Prostate gland (tissue), 2 donors: ENCODE measurements at regions of chr16 and their contacts with region 1.

Region 1: GRCh38 chr16:22388101-22388644 is 13.8 kb upstream of the CDR2 start:
- DNase-seq: no peak
- H3K4me3 ChIP-seq: no peak overlapping the region
- H3K27ac ChIP-seq: no peak overlapping the region
- H3K4me1 ChIP-seq: peaks cover 3% of the 10 kb centered on the region
- H3K27me3 ChIP-seq: no peaks in the 10 kb centered on the region
- CTCF ChIP-seq: no peak
- POLR2A ChIP-seq: no peak

Region 2: GRCh38 chr16:22190776-22191531 is 197.2 kb before region 1 on chr16:
- intact Hi-C with region 1: no loop called
- DNase-seq: peak; percentile 100
- H3K4me3 ChIP-seq: peak overlapping the region; percentile 34 to 68
- H3K27ac ChIP-seq: peak overlapping the region; percentile 96 to 98
- H3K4me1 ChIP-seq: peaks cover 12% of the 10 kb centered on the region
- H3K27me3 ChIP-seq: no peaks in the 10 kb centered on the region
- CTCF ChIP-seq: no peak
- POLR2A ChIP-seq: peak; percentile 95

Region 3: DNA sequence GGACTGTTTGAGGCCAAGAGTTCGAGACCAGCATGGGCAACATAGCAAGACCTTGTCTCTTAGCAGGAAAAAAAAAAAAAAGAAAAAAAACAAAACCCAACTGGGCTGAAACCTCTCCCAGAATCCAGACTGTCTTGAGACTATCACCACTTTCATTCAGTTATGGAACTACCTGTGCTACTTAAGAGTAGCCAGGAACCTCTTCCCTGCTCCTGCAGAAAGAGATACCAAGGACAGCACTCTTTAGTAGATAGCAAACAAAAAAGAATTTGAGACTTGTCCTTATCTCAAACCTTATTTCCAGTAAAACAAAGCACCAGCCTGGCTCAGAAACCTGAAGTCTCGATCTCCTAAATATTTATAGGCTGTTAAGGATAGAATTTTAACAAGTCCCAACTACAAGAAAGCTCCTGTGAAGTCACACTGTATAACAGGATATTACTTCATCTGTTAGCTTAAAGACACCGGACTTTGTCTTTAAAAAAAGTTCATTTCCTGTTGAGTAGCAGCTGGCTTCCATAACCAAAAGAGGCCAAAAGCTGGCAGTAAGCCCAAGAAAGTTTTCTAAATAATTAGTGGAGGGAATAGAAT is 18.9 kb before region 1 on chr16:
- intact Hi-C with region 1: loop called (anchors 2 kb)
- DNase-seq: no peak
- H3K4me3 ChIP-seq: no peak overlapping the region
- H3K27ac ChIP-seq: peak overlapping the region; percentile 7 to 38
- H3K4me1 ChIP-seq: no peaks in the 10 kb centered on the region
- H3K27me3 ChIP-seq: no peaks in the 10 kb centered on the region
- CTCF ChIP-seq: no peak
- POLR2A ChIP-seq: no peak

Region 4: GRCh38 chr16:22705799-22706198 is 317.6 kb after region 1 on chr16:
- intact Hi-C with region 1: no loop called
- DNase-seq: no peak
- H3K4me3 ChIP-seq: no peak overlapping the region
- H3K27ac ChIP-seq: no peak overlapping the region
- H3K4me1 ChIP-seq: no peaks in the 10 kb centered on the region
- H3K27me3 ChIP-seq: no peaks in the 10 kb centered on the region
- CTCF ChIP-seq: no peak
- POLR2A ChIP-seq: no peak